ENCODE measurements at regions of chr5 and their contacts with region 1.

Region 1: DNA sequence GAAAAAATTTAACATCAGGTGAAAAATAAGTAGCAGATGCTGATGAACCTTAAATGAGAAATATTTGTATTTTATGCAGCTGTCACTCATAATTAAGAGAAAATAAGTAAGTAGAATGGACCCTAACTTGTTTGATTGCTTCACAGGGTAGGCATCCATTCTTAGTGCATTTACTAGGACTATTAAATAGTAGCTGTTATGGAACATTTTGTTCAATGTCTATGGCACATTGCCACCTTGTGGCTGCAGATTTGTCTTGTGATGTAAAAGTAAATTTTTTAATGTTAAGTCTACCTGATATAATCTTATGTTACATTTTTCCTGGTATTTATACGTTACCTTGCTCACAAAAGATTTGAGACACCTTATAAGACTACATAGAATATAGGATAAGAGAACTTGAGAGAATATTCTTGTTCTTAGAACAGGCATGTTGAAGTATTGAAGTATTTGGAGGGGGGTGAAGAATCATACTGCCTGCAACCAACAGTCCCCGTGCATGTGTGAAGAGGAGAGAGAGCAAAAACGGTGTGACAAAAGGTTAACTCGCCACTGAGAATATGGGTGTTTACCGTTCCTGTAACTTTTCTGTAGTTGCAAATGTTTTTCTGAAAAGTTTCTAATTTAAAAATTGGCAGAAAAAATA is 161.1 kb downstream of the MAST4 start:
- DNase-seq: peak in 34 of 42 donors; percentile 8 to 80 (median 50)

Region 2: DNA sequence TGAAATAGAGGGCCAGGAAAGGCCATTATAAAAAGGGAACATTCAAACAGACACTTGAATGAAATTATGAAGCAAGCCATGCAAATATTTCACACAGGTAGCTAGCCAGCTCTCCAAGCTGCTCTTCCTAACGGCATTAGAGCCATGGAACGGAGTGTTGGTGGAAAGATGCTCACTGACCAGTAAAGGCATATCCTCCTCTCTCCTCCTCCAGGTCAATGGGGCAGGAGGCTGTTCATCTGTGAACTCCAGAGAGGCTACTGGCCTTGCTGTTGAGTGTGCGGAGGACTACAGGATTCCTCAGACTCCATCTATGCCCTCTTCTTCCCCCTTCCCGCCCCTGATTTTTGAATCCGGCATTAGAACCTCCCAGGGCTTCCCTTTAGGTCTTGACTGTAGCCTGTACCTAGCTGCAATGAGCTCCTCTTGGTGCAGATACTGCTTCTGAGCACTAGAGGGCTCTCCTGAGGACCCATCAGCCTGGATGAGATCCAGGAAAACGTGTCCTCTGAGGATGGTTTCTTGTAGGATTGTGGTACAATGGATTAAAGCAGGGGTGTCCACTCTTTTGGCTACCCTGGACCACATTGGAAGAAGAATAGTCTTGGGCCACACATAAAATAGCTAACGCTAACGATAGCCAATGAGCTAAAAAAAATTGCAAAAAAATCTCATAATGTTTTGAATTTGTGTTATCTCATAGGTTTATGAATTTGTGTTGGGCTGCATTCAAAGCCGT is 451.0 kb before region 1 on chr5:
- intact Hi-C with region 1: loop called (anchors 2 kb)
- DNase-seq: peak in 40 of 42 donors; percentile 21 to 86 (median 60)

Region 3: DNA sequence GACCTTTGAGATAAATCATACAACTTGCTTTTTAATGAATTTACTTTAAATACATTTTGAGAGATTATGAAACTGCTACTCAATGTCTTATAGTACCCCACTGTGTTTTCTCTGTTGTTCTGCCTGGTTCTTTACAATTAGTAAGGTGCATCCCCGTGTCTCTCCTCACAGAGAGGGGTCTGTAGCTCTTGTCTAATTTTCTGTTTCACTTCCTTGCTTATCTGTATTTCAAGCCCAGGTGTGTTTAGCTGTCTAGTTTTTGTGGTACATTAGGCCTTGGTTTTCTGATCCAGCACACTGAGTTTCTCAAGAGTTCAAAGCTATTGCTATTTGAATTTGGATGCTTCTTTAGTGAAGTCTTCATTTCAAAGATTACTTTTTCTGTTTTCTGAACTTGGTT is 56.1 kb before region 1 on chr5:
- intact Hi-C with region 1: no loop called
- DNase-seq: no peak

Region 4: GRCh38 chr5:66796305-66797292 is 39.3 kb after region 1 on chr5:
- intact Hi-C with region 1: no loop called
- DNase-seq: no peak

Region 5: DNA sequence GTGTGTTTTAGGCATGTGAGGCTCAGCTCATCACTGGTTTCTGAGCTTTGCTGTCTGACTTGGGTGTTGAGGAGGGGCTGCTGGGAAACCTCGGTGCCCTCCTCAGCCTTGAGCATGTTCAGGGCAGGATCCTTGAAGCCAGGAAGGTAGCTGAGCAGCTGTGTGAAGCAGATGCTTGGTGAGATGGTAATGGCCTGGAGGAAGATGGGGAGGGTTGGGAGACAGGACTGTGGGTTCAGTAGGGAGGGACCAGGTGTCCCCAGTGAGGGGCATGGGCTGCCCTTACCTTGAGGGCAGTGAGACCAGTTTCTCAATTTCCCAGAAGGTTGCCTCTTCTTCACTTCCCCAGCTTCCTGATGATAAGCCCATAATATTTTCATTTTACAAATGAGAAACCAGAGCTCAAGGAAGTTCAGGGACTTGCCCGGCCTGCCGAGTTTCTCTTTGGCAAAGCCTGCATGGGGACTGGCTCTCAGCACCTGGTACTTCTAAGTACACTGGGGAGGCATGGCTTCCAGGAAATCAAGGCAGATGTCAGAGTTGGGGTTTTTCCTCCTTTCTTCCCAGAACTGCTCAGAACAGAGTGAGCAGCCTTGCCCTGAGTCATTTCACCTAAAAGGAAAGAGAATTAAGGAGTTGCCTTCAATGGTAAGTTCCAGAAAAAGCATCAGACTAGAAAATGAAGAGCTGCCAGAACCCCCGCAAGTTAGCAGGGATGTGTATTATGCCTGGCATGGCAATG is 64.5 kb after region 1 on chr5:
- intact Hi-C with region 1: no loop called
- DNase-seq: peak in 2 of 42 donors; percentile 22 to 45

Region 6: GRCh38 chr5:66945389-66946349 is 188.4 kb after region 1 on chr5:
- intact Hi-C with region 1: no loop called
- DNase-seq: no peak

Measured in head of caudate nucleus (tissue), 42 donors.